OCI-LY7 (cell line): ENCODE measurements at regions of chr3 and their contacts with region 1.

Region 1: GRCh38 chr3:34260271-34261006 is 462.0 kb downstream of the PDCD6IP start:
- DNase-seq: peak; percentile 33
- H3K4me3 ChIP-seq: no peak overlapping the region
- H3K27ac ChIP-seq: no peak overlapping the region
- H3K4me1 ChIP-seq: no peaks in the 10 kb centered on the region
- CTCF ChIP-seq: peak; percentile 83

Region 2: GRCh38 chr3:33980252-33980651 is 280.2 kb before region 1 on chr3:
- CTCF ChIA-PET with region 1: no interaction called
- POLR2A ChIA-PET with region 1: interaction called, 3 read pairs
- intact Hi-C with region 1: loop called (anchors 10 kb)
- DNase-seq: peak; percentile 42
- H3K4me3 ChIP-seq: no peak overlapping the region
- H3K27ac ChIP-seq: no peak overlapping the region
- H3K4me1 ChIP-seq: no peaks in the 10 kb centered on the region
- CTCF ChIP-seq: peak; percentile 80

Region 3: DNA sequence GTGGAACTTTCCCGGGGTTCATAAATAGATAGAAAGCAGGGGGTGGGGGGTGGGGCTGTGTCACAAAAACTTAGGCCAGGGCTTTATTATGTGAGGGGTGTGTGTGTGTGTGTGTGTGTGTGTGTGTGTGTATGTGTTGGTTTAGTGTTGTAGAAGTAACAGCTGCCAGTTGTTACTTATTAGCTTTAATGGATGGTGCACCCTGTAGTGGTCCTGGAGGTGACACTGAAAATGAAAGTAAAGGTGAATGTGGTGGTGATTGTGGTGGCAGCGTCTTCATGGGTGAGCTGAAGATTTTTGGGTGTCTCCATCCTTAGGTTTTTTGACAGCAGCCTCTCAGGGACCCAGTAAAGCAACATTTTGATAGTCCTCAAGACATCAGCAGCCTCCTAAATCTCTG is 12.1 kb before region 1 on chr3:
- CTCF ChIA-PET with region 1: interaction called, 3 read pairs
- POLR2A ChIA-PET with region 1: interaction called, 18 read pairs
- intact Hi-C with region 1: no loop called
- DNase-seq: no peak
- H3K4me3 ChIP-seq: no peak overlapping the region
- H3K27ac ChIP-seq: no peak overlapping the region
- H3K4me1 ChIP-seq: no peaks in the 10 kb centered on the region
- CTCF ChIP-seq: no peak

Region 4: GRCh38 chr3:34683851-34684250 is 423.4 kb after region 1 on chr3:
- CTCF ChIA-PET with region 1: no interaction called
- POLR2A ChIA-PET with region 1: no interaction called
- intact Hi-C with region 1: loop called (anchors 10 kb)
- DNase-seq: peak; percentile 59
- H3K4me3 ChIP-seq: no peak overlapping the region
- H3K27ac ChIP-seq: no peak overlapping the region
- H3K4me1 ChIP-seq: no peaks in the 10 kb centered on the region
- CTCF ChIP-seq: peak; percentile 81